ENCODE measurements at regions of chr13 and their contacts with region 1.

Region 1: DNA sequence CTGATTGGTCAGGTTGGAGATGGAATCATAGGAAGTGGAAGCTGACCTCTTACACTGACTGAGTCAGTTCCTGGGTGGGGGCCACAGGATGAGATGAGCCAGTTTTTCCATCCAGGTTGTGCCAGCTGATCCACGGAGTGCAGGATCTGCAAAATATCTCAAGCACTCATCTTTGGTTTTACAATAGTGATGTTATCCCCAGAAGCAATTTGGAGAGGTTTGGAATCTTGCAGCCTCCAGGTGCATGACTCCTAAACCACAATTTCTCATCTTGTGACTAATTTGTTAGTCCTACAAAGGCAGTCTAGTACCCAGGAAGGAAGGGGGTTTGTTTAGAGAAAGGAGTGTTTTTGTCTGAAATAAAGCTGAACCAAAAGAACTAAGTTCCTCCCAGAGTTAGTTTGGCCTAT is 212.8 kb downstream of the SLITRK6 start:
- DNase-seq: peak; percentile 97
- ATAC-seq: peak; percentile 72
- H3K4me3 ChIP-seq: no peak overlapping the region
- H3K27ac ChIP-seq: peak overlapping the region; percentile 97
- H3K4me1 ChIP-seq: peaks cover 49% of the 10 kb centered on the region
- H3K27me3 ChIP-seq: no peaks in the 10 kb centered on the region
- CTCF ChIP-seq: no peak

Region 2: DNA sequence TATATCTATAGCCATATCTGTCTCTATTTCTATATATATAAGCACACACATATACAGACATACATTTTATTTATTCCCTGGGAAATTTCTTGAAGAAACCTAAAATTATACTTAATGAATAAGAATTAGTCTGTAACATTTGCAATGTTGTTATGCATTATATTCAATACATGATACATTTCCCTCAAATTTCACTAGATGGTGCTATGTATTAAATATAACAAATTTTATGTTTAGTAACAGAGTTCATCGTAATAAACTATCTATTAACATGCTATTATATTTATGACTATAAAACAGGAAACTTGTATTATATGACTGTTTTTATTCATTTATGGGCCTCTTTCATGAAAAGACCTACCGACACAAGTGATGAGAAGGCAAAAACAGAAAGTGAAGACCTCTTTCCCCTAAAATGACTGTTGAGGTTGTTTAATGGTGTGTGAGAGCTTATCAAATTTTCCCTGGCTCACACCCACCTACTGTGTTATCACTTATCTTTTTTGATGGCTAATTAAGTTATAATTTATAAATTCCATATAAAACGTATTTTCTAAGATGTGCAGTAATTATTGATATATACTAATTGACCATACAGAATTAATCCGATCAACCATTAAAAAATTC is 669.1 kb before region 1 on chr13:
- CTCF ChIA-PET with region 1: no interaction called
- POLR2A ChIA-PET with region 1: no interaction called
- intact Hi-C with region 1: loop called (anchors 5 kb)
- DNase-seq: peak; percentile 60
- ATAC-seq: peak; percentile 50; the same call in 1 of the 2 replicates
- H3K4me3 ChIP-seq: no peak overlapping the region
- H3K27ac ChIP-seq: no peak overlapping the region
- H3K4me1 ChIP-seq: no peaks in the 10 kb centered on the region
- H3K27me3 ChIP-seq: no peaks in the 10 kb centered on the region
- CTCF ChIP-seq: peak; percentile 58

Region 3: GRCh38 chr13:85367887-85368286 is 218.5 kb before region 1 on chr13:
- CTCF ChIA-PET with region 1: interaction called, 3 read pairs
- POLR2A ChIA-PET with region 1: interaction called, 10 read pairs
- intact Hi-C with region 1: no loop called
- DNase-seq: no peak
- ATAC-seq: no peak
- H3K4me3 ChIP-seq: no peak overlapping the region
- H3K27ac ChIP-seq: peak overlapping the region; percentile 65; the same call in 1 of the 2 replicates
- H3K4me1 ChIP-seq: peaks cover 21% of the 10 kb centered on the region
- H3K27me3 ChIP-seq: no peaks in the 10 kb centered on the region
- CTCF ChIP-seq: no peak

Region 4: DNA sequence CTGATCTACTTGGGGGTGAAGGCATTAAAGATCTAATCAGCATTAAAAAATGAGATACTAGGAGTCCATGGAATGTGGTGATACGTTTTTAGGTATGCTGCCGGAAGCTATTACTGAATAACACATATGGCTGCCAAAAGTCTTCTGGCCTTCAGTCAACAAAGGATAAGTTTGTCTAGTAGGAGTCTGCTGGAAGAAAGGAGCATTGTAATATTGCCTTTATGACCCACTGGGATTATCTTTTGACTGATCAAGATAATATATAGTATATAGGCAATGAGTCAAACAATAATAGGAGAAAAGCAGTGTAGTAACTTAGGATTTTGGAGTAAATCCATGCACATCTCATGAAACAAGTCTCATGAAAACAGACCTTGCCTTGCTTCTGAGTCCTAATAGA is 82.6 kb before region 1 on chr13:
- CTCF ChIA-PET with region 1: interaction called, 3 read pairs
- POLR2A ChIA-PET with region 1: no interaction called
- intact Hi-C with region 1: loop called (anchors 2 kb)
- DNase-seq: peak; percentile 92
- ATAC-seq: peak; percentile 82
- H3K4me3 ChIP-seq: no peak overlapping the region
- H3K27ac ChIP-seq: peak overlapping the region; percentile 74
- H3K4me1 ChIP-seq: peaks cover 55% of the 10 kb centered on the region
- H3K27me3 ChIP-seq: no peaks in the 10 kb centered on the region
- CTCF ChIP-seq: no peak

Region 5: GRCh38 chr13:85675151-85675907 is 88.9 kb after region 1 on chr13:
- CTCF ChIA-PET with region 1: no interaction called
- POLR2A ChIA-PET with region 1: no interaction called
- intact Hi-C with region 1: no loop called
- DNase-seq: no peak
- ATAC-seq: no peak
- H3K4me3 ChIP-seq: no peak overlapping the region
- H3K27ac ChIP-seq: no peak overlapping the region
- H3K4me1 ChIP-seq: no peaks in the 10 kb centered on the region
- H3K27me3 ChIP-seq: no peaks in the 10 kb centered on the region
- CTCF ChIP-seq: no peak

Region 6: DNA sequence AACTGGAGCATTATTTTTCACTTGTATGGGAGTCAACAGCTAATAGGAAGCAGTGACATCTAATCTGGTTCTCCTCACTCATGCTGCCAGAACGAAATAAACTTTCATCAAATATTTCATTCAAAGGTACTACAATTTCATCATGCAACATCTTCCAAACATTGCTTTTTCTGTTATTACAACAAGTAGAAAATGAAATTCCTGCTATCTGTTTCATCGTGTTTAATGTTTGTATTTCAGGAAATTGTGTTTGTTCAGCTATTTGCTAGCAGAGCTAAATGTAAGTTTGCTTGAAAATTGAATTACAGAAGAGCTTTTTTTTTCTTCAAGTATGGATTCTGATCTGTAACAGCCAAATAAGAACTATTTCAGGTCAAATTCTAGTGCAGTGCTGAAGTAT is 122.6 kb after region 1 on chr13:
- CTCF ChIA-PET with region 1: no interaction called
- POLR2A ChIA-PET with region 1: interaction called, 5 read pairs
- intact Hi-C with region 1: loop called (anchors 1 kb)
- DNase-seq: peak; percentile 21
- ATAC-seq: peak; percentile 61; the same call in 1 of the 2 replicates
- H3K4me3 ChIP-seq: peak overlapping the region; percentile 9; the same call in 1 of the 2 replicates
- H3K27ac ChIP-seq: peak overlapping the region; percentile 41; the same call in 1 of the 2 replicates
- H3K4me1 ChIP-seq: peaks cover 14% of the 10 kb centered on the region
- H3K27me3 ChIP-seq: no peaks in the 10 kb centered on the region
- CTCF ChIP-seq: no peak

Region 7: DNA sequence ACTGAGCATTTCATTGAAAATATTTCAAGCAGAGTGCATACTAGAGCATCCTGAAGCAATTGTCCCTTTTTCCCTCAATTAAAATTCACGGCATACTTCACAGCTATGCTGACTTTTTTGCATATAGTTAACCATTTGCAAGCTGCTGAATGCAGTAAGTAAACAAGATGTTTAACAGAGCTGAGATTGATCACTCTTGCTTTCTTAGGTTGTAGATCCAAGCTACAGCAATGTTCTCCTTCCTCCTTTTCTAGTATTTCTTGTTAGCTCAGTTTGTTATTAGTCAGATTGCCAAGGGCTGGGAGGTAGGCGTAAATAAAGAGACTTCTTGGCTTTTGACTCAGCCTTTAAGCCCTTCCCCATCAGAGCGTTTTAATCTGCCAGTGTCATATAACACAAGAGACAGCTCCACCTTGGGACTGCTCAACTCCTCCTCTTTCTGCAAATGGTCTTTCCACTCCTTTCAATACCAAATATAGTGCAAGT is 212.7 kb after region 1 on chr13 and contains the start of gene SLITRK6:
- CTCF ChIA-PET with region 1: interaction called, 5 read pairs
- POLR2A ChIA-PET with region 1: interaction called, 3 read pairs
- intact Hi-C with region 1: loop called (anchors 1 kb)
- DNase-seq: peak; percentile 93
- ATAC-seq: peak; percentile 100
- H3K4me3 ChIP-seq: peak within 1 kb of the TSS; percentile 71
- H3K27ac ChIP-seq: peak within 1 kb of the TSS; percentile 46
- H3K4me1 ChIP-seq: peaks cover 15% of the 10 kb centered on the region
- H3K27me3 ChIP-seq: no peaks in the 10 kb centered on the region
- CTCF ChIP-seq: peak; percentile 50
- total RNA-seq, gene SLITRK6: 4.1 and 4.6 TPM in 2 replicates

Region 8: GRCh38 chr13:86121881-86122280 is 535.5 kb after region 1 on chr13:
- CTCF ChIA-PET with region 1: no interaction called
- POLR2A ChIA-PET with region 1: no interaction called
- intact Hi-C with region 1: no loop called
- DNase-seq: no peak
- ATAC-seq: no peak
- H3K4me3 ChIP-seq: no peak overlapping the region
- H3K27ac ChIP-seq: no peak overlapping the region
- H3K4me1 ChIP-seq: no peaks in the 10 kb centered on the region
- H3K27me3 ChIP-seq: no peaks in the 10 kb centered on the region
- CTCF ChIP-seq: no peak